WTC11 (cell line): ENCODE measurements at regions of chr17 and their contacts with region 1.

Region 1: GRCh38 chr17:50161023-50161910 is 4.5 kb upstream of the SGCA start:
- DNase-seq: peak; percentile 96
- ATAC-seq: peak; percentile 92
- H3K4me3 Mint-ChIP-seq: peak overlapping the region; percentile 79
- H3K27ac Mint-ChIP-seq: peak overlapping the region; percentile 51
- H3K4me1 Mint-ChIP-seq: peaks cover 10% of the 10 kb centered on the region
- H3K27me3 Mint-ChIP-seq: peaks cover 33% of the 10 kb centered on the region
- CTCF ChIP-seq: peak; percentile 64

Region 2: DNA sequence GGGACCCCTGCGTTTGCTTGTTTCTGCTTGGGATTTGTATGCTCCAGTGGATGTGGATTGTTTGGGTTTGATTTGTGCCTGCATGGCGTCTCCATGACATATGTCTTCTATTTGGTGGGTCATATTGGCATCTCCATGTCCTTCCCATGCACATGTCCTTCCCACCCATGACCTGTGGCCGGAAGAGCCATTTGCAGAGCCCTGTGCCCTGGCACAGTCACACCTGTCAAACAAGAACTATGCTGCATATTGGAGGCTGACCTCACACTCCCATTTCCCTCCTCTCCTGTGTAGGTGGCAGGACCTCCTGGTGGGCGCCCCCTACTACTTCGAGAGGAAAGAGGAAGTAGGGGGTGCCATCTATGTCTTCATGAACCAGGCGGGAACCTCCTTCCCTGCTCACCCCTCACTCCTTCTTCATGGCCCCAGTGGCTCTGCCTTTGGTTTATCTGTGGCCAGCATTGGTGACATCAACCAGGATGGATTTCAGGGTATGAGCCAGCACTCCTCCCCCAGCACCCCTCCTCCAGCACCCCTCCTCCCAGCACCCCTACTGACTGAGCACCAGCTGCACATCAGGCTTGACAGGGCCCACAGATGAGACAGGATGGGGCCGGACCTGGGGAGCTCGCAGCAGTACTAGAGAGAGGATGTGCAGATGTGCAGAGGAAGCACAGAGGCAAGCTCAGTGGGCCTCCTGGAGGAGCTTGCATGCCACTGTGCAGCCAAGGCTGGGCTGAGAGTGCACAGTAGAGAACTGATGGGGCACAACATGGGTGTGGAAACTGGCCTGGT is 89.4 kb before region 1 on chr17:
- CTCF ChIA-PET with region 1: no interaction called
- POLR2A ChIA-PET with region 1: no interaction called
- DNase-seq: no peak
- ATAC-seq: no peak
- H3K4me3 Mint-ChIP-seq: no peak overlapping the region
- H3K27ac Mint-ChIP-seq: no peak overlapping the region
- H3K4me1 Mint-ChIP-seq: peaks cover 7% of the 10 kb centered on the region
- H3K27me3 Mint-ChIP-seq: no peaks in the 10 kb centered on the region
- CTCF ChIP-seq: no peak

Region 3: DNA sequence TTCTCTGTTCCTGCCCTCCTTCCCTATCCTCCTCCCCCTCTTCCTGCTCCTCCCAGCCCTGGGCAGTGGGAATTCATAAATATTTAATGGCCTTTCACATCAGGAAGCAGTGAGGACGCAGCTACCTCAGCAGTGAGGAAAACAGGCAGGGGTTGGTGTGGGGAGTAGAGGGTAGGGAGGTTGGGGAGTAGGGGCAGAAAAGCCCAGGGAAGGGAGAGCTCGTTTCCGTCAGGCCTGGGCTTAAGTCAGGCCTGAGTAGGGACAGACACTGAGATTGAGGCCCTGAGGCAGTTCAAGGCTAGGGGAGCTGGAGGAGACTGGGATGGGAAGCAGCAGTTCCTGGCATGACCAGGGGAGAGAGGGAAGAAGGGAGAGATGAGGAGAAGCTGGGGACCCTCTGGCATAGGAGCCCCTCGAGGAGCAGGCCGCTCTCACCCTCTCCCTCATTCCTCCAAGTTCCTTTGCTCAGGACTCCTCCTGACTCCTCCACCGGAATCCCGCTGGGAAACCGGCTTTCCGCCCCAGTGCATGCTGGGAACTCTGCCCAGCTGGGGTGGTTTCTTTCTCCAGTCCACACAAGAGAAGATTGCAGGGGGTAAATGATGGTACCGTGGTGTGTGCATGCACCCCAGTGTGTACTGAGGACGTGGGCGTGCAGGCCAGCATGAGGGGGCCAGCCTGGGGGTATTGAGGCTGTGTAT is 37.5 kb before region 1 on chr17:
- CTCF ChIA-PET with region 1: interaction called, 15 read pairs
- POLR2A ChIA-PET with region 1: no interaction called
- DNase-seq: no peak
- ATAC-seq: peak; percentile 70
- H3K4me3 Mint-ChIP-seq: peak overlapping the region; percentile 11; the same call in 1 of the 2 replicates
- H3K27ac Mint-ChIP-seq: peak overlapping the region; percentile 66
- H3K4me1 Mint-ChIP-seq: peaks cover 39% of the 10 kb centered on the region
- H3K27me3 Mint-ChIP-seq: peaks cover 38% of the 10 kb centered on the region
- CTCF ChIP-seq: no peak

Region 4: GRCh38 chr17:50139950-50140871 is 21.1 kb before region 1 on chr17:
- CTCF ChIA-PET with region 1: interaction called, 31 read pairs
- POLR2A ChIA-PET with region 1: no interaction called
- DNase-seq: peak; percentile 90
- ATAC-seq: peak; percentile 91
- H3K4me3 Mint-ChIP-seq: 0 out of 2 replicates have a peak overlapping the region, but pooled peaks have one; percentile 14
- H3K27ac Mint-ChIP-seq: no peak overlapping the region
- H3K4me1 Mint-ChIP-seq: peaks cover 14% of the 10 kb centered on the region
- H3K27me3 Mint-ChIP-seq: no peaks in the 10 kb centered on the region
- CTCF ChIP-seq: peak; percentile 99

Region 5: DNA sequence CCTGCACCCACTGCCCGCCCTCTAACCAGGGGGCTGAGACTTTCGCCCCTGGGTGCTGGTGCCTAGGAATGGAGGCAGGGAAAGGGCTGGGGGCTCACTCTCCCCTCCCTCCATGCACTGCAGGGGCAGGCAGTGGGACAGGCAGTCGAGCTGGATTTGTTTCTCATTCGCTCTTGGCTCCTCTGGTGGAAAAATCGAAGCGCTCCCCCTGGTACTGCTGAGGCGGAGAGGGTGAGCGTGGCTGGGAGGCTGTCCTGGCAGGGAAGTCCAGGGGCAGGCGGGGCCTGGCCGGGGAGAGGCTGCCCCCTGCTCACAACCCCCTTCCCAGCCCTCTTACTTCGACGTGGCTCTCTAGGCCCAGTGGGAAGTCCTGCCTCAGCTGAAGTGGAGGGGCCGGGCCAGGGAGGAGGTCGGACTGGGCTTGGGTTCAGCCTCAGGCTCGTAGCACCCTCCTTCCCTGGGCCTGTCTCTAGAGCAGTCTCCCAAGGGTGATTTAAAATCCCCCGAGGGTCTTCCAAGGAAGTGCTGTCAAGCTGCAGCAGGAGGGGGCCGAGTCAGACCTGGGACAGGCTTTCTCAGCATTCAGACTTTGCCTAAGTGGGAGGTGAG is 96.5 kb after region 1 on chr17:
- CTCF ChIA-PET with region 1: no interaction called
- POLR2A ChIA-PET with region 1: no interaction called
- DNase-seq: no peak
- ATAC-seq: no peak
- H3K4me3 Mint-ChIP-seq: no peak overlapping the region
- H3K27ac Mint-ChIP-seq: no peak overlapping the region
- H3K4me1 Mint-ChIP-seq: peaks cover 3% of the 10 kb centered on the region; the same call in 1 of the 2 replicates
- H3K27me3 Mint-ChIP-seq: peaks cover 3% of the 10 kb centered on the region
- CTCF ChIP-seq: no peak

Region 6: DNA sequence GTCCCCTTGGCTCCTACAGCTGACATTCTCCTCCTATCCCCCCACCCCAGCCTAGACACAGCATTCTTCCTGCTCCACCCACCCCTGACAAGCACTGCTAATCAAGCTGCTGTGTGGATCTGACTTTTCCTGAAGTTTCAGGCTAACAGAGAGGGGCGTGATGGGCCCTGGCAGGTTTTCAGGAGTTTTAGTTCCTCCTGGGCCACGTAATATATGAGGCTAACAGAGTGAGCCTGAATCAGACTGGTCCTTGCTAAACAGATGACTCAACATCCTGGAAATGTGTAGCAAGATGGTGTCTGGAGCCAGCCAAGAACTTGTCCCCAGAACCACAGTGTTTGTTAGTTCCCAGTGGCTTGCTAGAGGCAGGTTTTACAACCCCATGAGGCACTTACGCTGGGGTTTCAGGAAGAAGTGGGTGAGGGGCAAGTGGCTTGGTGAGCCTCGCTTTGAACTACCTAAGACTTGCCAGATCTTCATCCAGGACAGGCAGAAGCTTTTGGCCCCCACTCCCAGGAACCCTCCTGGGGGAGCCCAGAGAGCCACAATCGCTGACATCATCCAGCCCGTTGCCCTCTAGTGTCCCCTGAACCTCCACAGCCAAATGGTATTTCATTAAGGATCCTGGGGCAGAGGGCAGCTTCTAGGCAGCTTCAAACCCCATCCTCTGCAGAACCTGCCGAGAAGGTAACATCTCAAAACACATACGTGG is 128.9 kb after region 1 on chr17:
- CTCF ChIA-PET with region 1: no interaction called
- POLR2A ChIA-PET with region 1: no interaction called
- DNase-seq: no peak
- ATAC-seq: peak; percentile 26
- H3K4me3 Mint-ChIP-seq: no peak overlapping the region
- H3K27ac Mint-ChIP-seq: no peak overlapping the region
- H3K4me1 Mint-ChIP-seq: peaks cover 17% of the 10 kb centered on the region; the same call in 1 of the 2 replicates
- H3K27me3 Mint-ChIP-seq: no peaks in the 10 kb centered on the region; the same call in 1 of the 2 replicates
- CTCF ChIP-seq: no peak